ENCODE measurements at regions of chr2 and their contacts with region 1.

Region 1: GRCh38 chr2:66574701-66575624 is 140.0 kb downstream of the MEIS1 start:
- DNase-seq: no peak
- ATAC-seq: peak in 2 of 3 donors; percentile 30 to 34
- H3K4me3 ChIP-seq: no peak overlapping the region
- H3K4me3 Mint-ChIP-seq: peak overlapping the region; percentile 81
- H3K27ac ChIP-seq: no peak overlapping the region
- H3K27ac Mint-ChIP-seq: no peak overlapping the region
- H3K4me1 ChIP-seq: peaks cover 26% of the 10 kb centered on the region
- H3K4me1 Mint-ChIP-seq: peaks cover 8 to 13% of the 10 kb centered on the region in 2 donors
- H3K27me3 ChIP-seq: peaks cover 50% of the 10 kb centered on the region
- H3K27me3 Mint-ChIP-seq: peaks cover 41 to 55% of the 10 kb centered on the region in 2 donors
- CTCF ChIP-seq: no peak

Region 2: DNA sequence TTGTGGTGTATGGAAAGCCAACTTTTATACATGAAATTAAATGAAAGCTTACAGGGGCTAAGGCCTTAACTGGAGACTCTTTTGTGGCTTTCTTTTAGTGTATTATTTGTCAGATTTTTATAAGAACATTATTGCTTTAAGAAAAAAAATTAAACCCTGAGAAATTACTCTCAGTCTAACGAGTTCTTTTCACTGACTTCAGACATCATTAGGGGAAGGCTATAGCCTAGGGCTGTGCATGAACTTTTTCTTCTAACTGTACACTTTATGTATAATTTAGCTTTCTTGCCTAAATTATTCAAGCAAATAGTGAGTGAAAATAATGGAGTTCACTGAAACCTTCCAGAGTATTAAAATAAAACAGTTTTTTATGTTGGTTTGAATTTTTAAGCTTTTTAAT is 291.2 kb before region 1 on chr2:
- intact Hi-C with region 1: no loop called
- DNase-seq: no peak
- ATAC-seq: no peak
- H3K4me3 ChIP-seq: no peak overlapping the region
- H3K4me3 Mint-ChIP-seq: no peak overlapping the region
- H3K27ac ChIP-seq: no peak overlapping the region
- H3K27ac Mint-ChIP-seq: no peak overlapping the region
- H3K4me1 ChIP-seq: no peaks in the 10 kb centered on the region
- H3K4me1 Mint-ChIP-seq: no peaks in the 10 kb centered on the region
- H3K27me3 ChIP-seq: no peaks in the 10 kb centered on the region
- H3K27me3 Mint-ChIP-seq: no peaks in the 10 kb centered on the region
- CTCF ChIP-seq: no peak

Region 3: DNA sequence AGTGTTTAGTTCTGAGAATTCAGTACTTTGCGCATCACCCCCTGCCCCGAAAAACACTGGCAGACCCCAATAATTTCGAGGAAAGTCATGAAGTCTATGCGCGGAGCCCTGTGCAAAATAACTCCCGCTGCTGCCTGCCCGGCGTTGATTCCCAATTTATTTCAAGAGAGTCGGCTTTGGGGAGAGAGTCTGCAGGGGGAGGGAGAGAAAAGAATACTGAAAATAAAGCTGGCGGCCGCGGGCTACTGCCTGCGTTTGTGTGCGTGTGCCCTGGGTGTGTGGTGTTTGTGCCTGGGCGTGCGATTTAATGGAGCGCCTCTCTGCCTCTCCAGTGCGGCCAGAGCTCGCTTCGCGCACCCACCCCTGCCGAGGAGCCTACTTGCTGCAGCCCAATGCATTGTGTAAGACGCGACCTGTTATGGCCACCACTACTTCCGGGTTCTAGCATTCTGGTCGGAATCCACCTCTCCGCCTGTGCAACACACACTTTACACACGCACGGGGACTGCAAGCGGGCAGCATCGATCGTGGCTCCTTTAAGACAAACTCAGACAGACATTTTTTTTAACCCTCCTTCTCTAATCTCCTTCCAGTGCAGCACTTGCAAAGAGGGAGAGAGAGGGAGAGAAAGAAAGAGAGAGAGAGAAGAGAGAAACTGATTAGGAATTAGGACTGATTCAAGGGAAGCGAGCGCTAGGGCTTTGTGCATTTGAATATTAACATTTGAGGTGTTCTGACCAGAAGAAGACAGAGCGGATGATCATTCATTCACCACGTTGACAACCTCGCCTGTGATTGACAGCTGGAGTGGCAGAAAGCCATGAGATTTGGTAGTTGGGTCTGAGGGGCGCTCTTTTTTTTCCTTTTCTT is 140.0 kb before region 1 on chr2 and contains the start of gene MEIS1:
- intact Hi-C with region 1: loop called (anchors 10 kb)
- DNase-seq: peak; percentile 30 to 42
- ATAC-seq: peak; percentile 74 to 80 (median 75)
- H3K4me3 ChIP-seq: peak within 1 kb of the TSS; percentile 47
- H3K4me3 Mint-ChIP-seq: peak within 1 kb of the TSS; percentile 95
- H3K27ac ChIP-seq: peak within 1 kb of the TSS; percentile 39
- H3K27ac Mint-ChIP-seq: peak within 1 kb of the TSS; percentile 4 to 70
- H3K4me1 ChIP-seq: peaks cover 40% of the 10 kb centered on the region
- H3K4me1 Mint-ChIP-seq: peaks cover 36 to 38% of the 10 kb centered on the region in 2 donors
- H3K27me3 ChIP-seq: peaks cover 12% of the 10 kb centered on the region
- H3K27me3 Mint-ChIP-seq: peaks cover 67% of the 10 kb centered on the region in 2 donors
- CTCF ChIP-seq: no peak
- total RNA-seq, gene MEIS1: 2.0 to 5.4 (median 3.6) TPM

Region 4: GRCh38 chr2:66596256-66596655 is 21.3 kb after region 1 on chr2:
- intact Hi-C with region 1: no loop called
- DNase-seq: no peak
- ATAC-seq: no peak
- H3K4me3 ChIP-seq: no peak overlapping the region
- H3K4me3 Mint-ChIP-seq: no peak overlapping the region
- H3K27ac ChIP-seq: no peak overlapping the region
- H3K27ac Mint-ChIP-seq: no peak overlapping the region
- H3K4me1 ChIP-seq: no peaks in the 10 kb centered on the region
- H3K4me1 Mint-ChIP-seq: no peaks in the 10 kb centered on the region
- H3K27me3 ChIP-seq: no peaks in the 10 kb centered on the region
- H3K27me3 Mint-ChIP-seq: peaks cover 0 to 9% of the 10 kb centered on the region in 2 donors
- CTCF ChIP-seq: no peak